Activated CD8-positive, alpha-beta T cell treated with anti-CD3 and anti-CD28 coated beads, Interleukin-2, amount 10 ng/mL, durations not matched to agents 7 days and 5 days (primary cell): ENCODE measurements at regions of chr5 and their contacts with region 1.

Region 1: DNA sequence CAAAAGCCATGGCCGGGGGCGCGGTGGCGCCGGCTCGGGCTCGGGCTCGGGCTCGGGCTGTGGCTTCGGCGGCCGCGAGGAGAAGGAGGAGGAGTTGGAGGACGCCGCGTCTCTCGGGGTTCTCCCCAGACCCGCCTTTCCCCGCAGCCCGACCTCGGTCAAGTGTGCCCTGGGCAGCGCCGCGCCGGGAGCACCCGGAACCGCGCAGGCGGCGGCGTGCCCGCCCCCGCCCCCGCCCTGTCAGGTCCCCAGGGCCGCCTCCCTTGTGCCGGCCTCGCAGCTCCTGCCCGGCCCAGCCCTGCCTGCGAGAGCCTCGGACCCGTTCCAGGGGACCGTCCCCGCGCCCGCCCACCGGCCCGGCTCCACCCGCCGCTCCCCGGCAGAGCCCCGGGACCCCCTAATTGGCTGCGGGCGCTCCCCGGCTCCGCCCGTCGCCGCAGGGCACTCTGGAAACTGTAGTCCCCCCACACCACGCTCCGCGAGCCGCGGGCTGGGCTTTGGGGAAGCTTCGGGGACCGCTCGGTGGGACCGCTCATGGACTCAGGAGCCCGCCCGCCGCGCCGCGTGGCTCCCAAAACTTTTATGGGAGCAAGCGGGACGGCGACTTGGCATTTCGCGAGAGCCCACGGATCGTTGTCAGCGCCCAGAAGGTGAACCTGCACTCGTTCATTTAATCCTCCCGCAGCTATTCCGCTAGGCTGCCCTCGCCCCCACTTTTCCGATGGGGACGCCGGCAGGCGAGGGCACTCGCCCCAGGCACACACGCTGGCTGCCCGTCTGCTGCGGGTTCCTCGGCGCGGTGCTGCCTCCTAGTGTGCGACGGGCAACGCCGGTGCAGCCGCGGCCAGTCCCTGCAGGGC is at the start of gene STK10:
- DNase-seq: peak; percentile 93
- ATAC-seq: peak; percentile 78
- H3K4me3 Mint-ChIP-seq: peak within 1 kb of the TSS; percentile 100
- H3K27ac Mint-ChIP-seq: peak within 1 kb of the TSS; percentile 96
- H3K4me1 Mint-ChIP-seq: peaks cover 30% of the 10 kb centered on the region
- H3K27me3 Mint-ChIP-seq: no peaks in the 10 kb centered on the region
- total RNA-seq, gene STK10: 294 to 299 TPM

Region 2: GRCh38 chr5:172065501-172065990 is 122.7 kb before region 1 on chr5:
- CTCF ChIA-PET with region 1: interaction called, 21 read pairs
- POLR2A ChIA-PET with region 1: interaction called, 6 read pairs
- DNase-seq: no peak
- ATAC-seq: no peak
- H3K4me3 Mint-ChIP-seq: no peak overlapping the region
- H3K27ac Mint-ChIP-seq: no peak overlapping the region
- H3K4me1 Mint-ChIP-seq: peaks cover 59% of the 10 kb centered on the region
- H3K27me3 Mint-ChIP-seq: no peaks in the 10 kb centered on the region

Region 3: GRCh38 chr5:172106511-172107356 is 81.5 kb before region 1 on chr5:
- CTCF ChIA-PET with region 1: interaction called, 136 read pairs
- POLR2A ChIA-PET with region 1: interaction called, 102 read pairs
- DNase-seq: peak; percentile 65
- ATAC-seq: no peak
- H3K4me3 Mint-ChIP-seq: peak overlapping the region; percentile 22
- H3K27ac Mint-ChIP-seq: peak overlapping the region; percentile 67
- H3K4me1 Mint-ChIP-seq: peaks cover 64% of the 10 kb centered on the region
- H3K27me3 Mint-ChIP-seq: no peaks in the 10 kb centered on the region

Region 4: GRCh38 chr5:172156541-172156994 is 31.7 kb before region 1 on chr5:
- CTCF ChIA-PET with region 1: interaction called, 12 read pairs
- POLR2A ChIA-PET with region 1: interaction called, 3 read pairs
- DNase-seq: no peak
- ATAC-seq: no peak
- H3K4me3 Mint-ChIP-seq: no peak overlapping the region
- H3K27ac Mint-ChIP-seq: no peak overlapping the region
- H3K4me1 Mint-ChIP-seq: peaks cover 63% of the 10 kb centered on the region
- H3K27me3 Mint-ChIP-seq: no peaks in the 10 kb centered on the region

Region 5: GRCh38 chr5:172283020-172283861 is 95.0 kb after region 1 on chr5 and contains the start of gene UBTD2:
- CTCF ChIA-PET with region 1: interaction called, 37 read pairs
- POLR2A ChIA-PET with region 1: interaction called, 3 read pairs
- DNase-seq: peak; percentile 83
- ATAC-seq: peak; percentile 91
- H3K4me3 Mint-ChIP-seq: peak within 1 kb of the TSS; percentile 88
- H3K27ac Mint-ChIP-seq: peak within 1 kb of the TSS; percentile 76
- H3K4me1 Mint-ChIP-seq: peaks cover 22% of the 10 kb centered on the region
- H3K27me3 Mint-ChIP-seq: peaks cover 8% of the 10 kb centered on the region
- total RNA-seq, gene UBTD2: 12.0 to 12.8 TPM

Region 6: GRCh38 chr5:172370648-172371545 is 182.6 kb after region 1 on chr5:
- CTCF ChIA-PET with region 1: no interaction called
- POLR2A ChIA-PET with region 1: no interaction called
- DNase-seq: peak; percentile 69
- ATAC-seq: no peak
- H3K4me3 Mint-ChIP-seq: no peak overlapping the region
- H3K27ac Mint-ChIP-seq: no peak overlapping the region
- H3K4me1 Mint-ChIP-seq: no peaks in the 10 kb centered on the region
- H3K27me3 Mint-ChIP-seq: peaks cover 3% of the 10 kb centered on the region